ENCODE measurements at regions of chr4 and their contacts with region 1.

Region 1: GRCh38 chr4:108384544-108384943 is 215.8 kb upstream of the LEF1 start:
- DNase-seq: no peak
- ATAC-seq: no peak
- H3K4me3 ChIP-seq: no peak overlapping the region
- H3K4me3 Mint-ChIP-seq: no peak overlapping the region
- H3K27ac ChIP-seq: no peak overlapping the region
- H3K27ac Mint-ChIP-seq: no peak overlapping the region
- H3K4me1 ChIP-seq: no peaks in the 10 kb centered on the region
- H3K4me1 Mint-ChIP-seq: peaks cover 2 to 13% (median 6%) of the 10 kb centered on the region in 3 donors
- H3K27me3 ChIP-seq: no peaks in the 10 kb centered on the region
- H3K27me3 Mint-ChIP-seq: peaks cover 0 to 4% of the 10 kb centered on the region in 2 donors

Region 2: GRCh38 chr4:109708990-109709389 is 1324.4 kb after region 1 on chr4:
- CTCF ChIA-PET with region 1: no interaction called
- POLR2A ChIA-PET with region 1: interaction called in 1 of 2 experiments, 19 read pairs
- DNase-seq: no peak
- ATAC-seq: no peak
- H3K4me3 ChIP-seq: no peak overlapping the region
- H3K4me3 Mint-ChIP-seq: no peak overlapping the region
- H3K27ac ChIP-seq: no peak overlapping the region
- H3K27ac Mint-ChIP-seq: no peak overlapping the region
- H3K4me1 ChIP-seq: no peaks in the 10 kb centered on the region
- H3K4me1 Mint-ChIP-seq: peaks cover 3 to 4% (median 3%) of the 10 kb centered on the region in 3 donors
- H3K27me3 ChIP-seq: no peaks in the 10 kb centered on the region
- H3K27me3 Mint-ChIP-seq: no peaks in the 10 kb centered on the region

Measured in T-cell (primary cell).